Right cardiac atrium (tissue), 5 donors: ENCODE measurements at regions of chr3 and their contacts with region 1.

Region 1: GRCh38 chr3:177294221-177294620 is 96.9 kb upstream of the TBL1XR1 start:
- DNase-seq: peak in 2 of 3 donors; percentile 70
- ATAC-seq: peak; percentile 94
- H3K4me3 ChIP-seq: no peak overlapping the region
- H3K27ac ChIP-seq: peak overlapping the region; percentile 82
- H3K4me1 ChIP-seq: no peaks in the 10 kb centered on the region
- H3K27me3 ChIP-seq: no peaks in the 10 kb centered on the region

Region 2: GRCh38 chr3:177050501-177051237 is 243.6 kb before region 1 on chr3:
- intact Hi-C with region 1: loop called in 1 of 4 experiments (anchors 10 kb)
- DNase-seq: no peak
- ATAC-seq: peak; percentile 57 to 65
- H3K4me3 ChIP-seq: no peak overlapping the region
- H3K27ac ChIP-seq: no peak overlapping the region
- H3K4me1 ChIP-seq: no peaks in the 10 kb centered on the region
- H3K27me3 ChIP-seq: no peaks in the 10 kb centered on the region

Region 3: DNA sequence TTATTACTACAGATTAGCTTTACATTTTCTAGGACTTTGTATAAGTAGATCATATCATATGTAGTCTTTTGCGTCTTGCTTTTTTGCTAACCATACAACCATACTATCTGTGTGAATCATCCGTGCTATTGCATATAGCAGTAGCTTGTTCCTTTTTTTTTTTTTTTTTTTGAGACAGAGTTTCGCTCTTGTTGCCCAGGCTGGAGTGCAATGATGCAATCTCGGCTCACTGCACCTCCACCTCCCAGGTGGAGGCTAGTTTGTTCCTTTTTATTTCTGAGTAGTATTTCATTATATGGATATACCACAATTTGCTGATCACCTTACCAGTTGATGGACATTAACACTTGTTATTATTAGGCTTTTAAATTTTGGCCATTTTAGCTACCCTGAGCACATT is 42.5 kb before region 1 on chr3:
- intact Hi-C with region 1: no loop called
- DNase-seq: no peak
- ATAC-seq: no peak
- H3K4me3 ChIP-seq: no peak overlapping the region
- H3K27ac ChIP-seq: no peak overlapping the region
- H3K4me1 ChIP-seq: no peaks in the 10 kb centered on the region
- H3K27me3 ChIP-seq: no peaks in the 10 kb centered on the region